Activated T-helper 1 cell treated with anti-CD3 and anti-CD28 coated beads, Interleukin-12 subunit alpha, Interleukin-12 subunit beta, Interleukin-2, Interleukin-4 antibody, amounts not matched to agents 30 ng/mL and 10 ng/mL and 1 ng/mL, durations not matched to agents 14 hours and 24 hours and 36 hours (primary cell): ENCODE measurements at regions of chrX and their contacts with region 1.

Region 1: DNA sequence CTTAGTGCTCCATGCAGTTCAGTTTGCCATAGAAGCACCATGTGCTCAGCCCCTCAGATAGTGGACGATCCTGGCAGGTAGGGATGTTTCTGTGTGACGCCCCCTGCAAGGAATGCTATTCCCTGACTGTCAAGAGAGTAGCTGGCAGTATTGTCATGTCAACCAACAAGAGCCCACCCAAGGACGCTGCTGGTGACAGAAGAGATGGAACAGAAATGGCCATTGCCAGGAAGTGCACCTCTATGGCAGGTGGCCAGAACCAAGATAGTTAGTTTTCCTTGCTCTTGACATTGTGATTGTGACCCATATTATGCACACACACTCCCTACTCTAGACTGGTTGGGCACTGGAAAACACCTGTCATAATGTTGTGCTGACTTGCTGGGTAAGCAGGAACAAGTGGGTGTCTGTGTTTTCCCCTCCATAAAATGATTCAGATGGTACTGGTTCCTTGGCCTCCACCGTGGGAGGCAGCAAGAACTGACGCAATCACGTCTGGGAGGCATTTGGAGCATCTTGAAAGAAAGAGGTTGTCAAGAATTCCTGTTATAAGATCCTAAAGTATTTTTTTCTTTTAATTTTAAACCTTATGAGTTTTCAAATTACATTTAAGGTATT is 507.9 kb downstream of the MID1IP1 start:
- DNase-seq: peak; percentile 3
- H3K4me3 Mint-ChIP-seq: peak overlapping the region; percentile 58
- H3K27ac Mint-ChIP-seq: peak overlapping the region; percentile 100
- H3K4me1 Mint-ChIP-seq: peaks cover 67% of the 10 kb centered on the region
- H3K27me3 Mint-ChIP-seq: no peaks in the 10 kb centered on the region

Region 2: GRCh38 chrX:38774249-38774648 is 534.9 kb before region 1 on chrX:
- intact Hi-C with region 1: no loop called
- DNase-seq: no peak
- H3K4me3 Mint-ChIP-seq: no peak overlapping the region
- H3K27ac Mint-ChIP-seq: no peak overlapping the region
- H3K4me1 Mint-ChIP-seq: peaks cover 5% of the 10 kb centered on the region
- H3K27me3 Mint-ChIP-seq: peaks cover 3% of the 10 kb centered on the region

Region 3: GRCh38 chrX:39162322-39162735 is 146.8 kb before region 1 on chrX:
- intact Hi-C with region 1: loop called (anchors 5 kb)
- DNase-seq: no peak
- H3K4me3 Mint-ChIP-seq: peak overlapping the region; percentile 22
- H3K27ac Mint-ChIP-seq: peak overlapping the region; percentile 71
- H3K4me1 Mint-ChIP-seq: peaks cover 45% of the 10 kb centered on the region
- H3K27me3 Mint-ChIP-seq: peaks cover 2% of the 10 kb centered on the region

Region 4: GRCh38 chrX:39196192-39197102 is 112.7 kb before region 1 on chrX:
- intact Hi-C with region 1: loop called (anchors 1 kb)
- DNase-seq: peak; percentile 44
- H3K4me3 Mint-ChIP-seq: peak overlapping the region; percentile 58
- H3K27ac Mint-ChIP-seq: peak overlapping the region; percentile 87
- H3K4me1 Mint-ChIP-seq: peaks cover 52% of the 10 kb centered on the region
- H3K27me3 Mint-ChIP-seq: no peaks in the 10 kb centered on the region

Region 5: GRCh38 chrX:39201305-39201990 is 107.7 kb before region 1 on chrX:
- intact Hi-C with region 1: loop called (anchors 1 kb)
- DNase-seq: no peak
- H3K4me3 Mint-ChIP-seq: no peak overlapping the region
- H3K27ac Mint-ChIP-seq: peak overlapping the region; percentile 79
- H3K4me1 Mint-ChIP-seq: peaks cover 82% of the 10 kb centered on the region
- H3K27me3 Mint-ChIP-seq: no peaks in the 10 kb centered on the region

Region 6: GRCh38 chrX:39268207-39268606 is 40.9 kb before region 1 on chrX:
- intact Hi-C with region 1: loop called (anchors 1 kb)
- DNase-seq: no peak
- H3K4me3 Mint-ChIP-seq: peak overlapping the region; percentile 24
- H3K27ac Mint-ChIP-seq: peak overlapping the region; percentile 84
- H3K4me1 Mint-ChIP-seq: peaks cover 39% of the 10 kb centered on the region
- H3K27me3 Mint-ChIP-seq: no peaks in the 10 kb centered on the region

Region 7: GRCh38 chrX:39293203-39293602 is 15.9 kb before region 1 on chrX:
- intact Hi-C with region 1: loop called (anchors 1 kb)
- DNase-seq: no peak
- H3K4me3 Mint-ChIP-seq: peak overlapping the region; percentile 62
- H3K27ac Mint-ChIP-seq: peak overlapping the region; percentile 82
- H3K4me1 Mint-ChIP-seq: peaks cover 40% of the 10 kb centered on the region
- H3K27me3 Mint-ChIP-seq: no peaks in the 10 kb centered on the region

Region 8: GRCh38 chrX:39578354-39578869 is 269.3 kb after region 1 on chrX:
- intact Hi-C with region 1: loop called (anchors 1 kb)
- DNase-seq: peak; percentile 16
- H3K4me3 Mint-ChIP-seq: peak overlapping the region; percentile 59
- H3K27ac Mint-ChIP-seq: peak overlapping the region; percentile 82
- H3K4me1 Mint-ChIP-seq: peaks cover 28% of the 10 kb centered on the region
- H3K27me3 Mint-ChIP-seq: no peaks in the 10 kb centered on the region

Region 9: GRCh38 chrX:39891781-39892180 is 582.7 kb after region 1 on chrX:
- intact Hi-C with region 1: no loop called
- DNase-seq: no peak
- H3K4me3 Mint-ChIP-seq: no peak overlapping the region
- H3K27ac Mint-ChIP-seq: peak overlapping the region; percentile 1
- H3K4me1 Mint-ChIP-seq: peaks cover 20% of the 10 kb centered on the region
- H3K27me3 Mint-ChIP-seq: peaks cover 4% of the 10 kb centered on the region